Thyroid gland (tissue), 4 donors: ENCODE measurements at regions of chr1 and their contacts with region 1.

Region 1: GRCh38 chr1:163174524-163175437 is 27.9 kb downstream of the RGS5 start:
- DNase-seq: peak; percentile 50 to 63
- H3K4me3 ChIP-seq: no peak overlapping the region
- H3K27ac ChIP-seq: no peak overlapping the region
- H3K4me1 ChIP-seq: peaks cover 0 to 3% of the 10 kb centered on the region in 2 donors
- H3K27me3 ChIP-seq: no peaks in the 10 kb centered on the region
- CTCF ChIP-seq: peak; percentile 32 to 85 (median 72)
- POLR2A ChIP-seq: no peak

Region 2: DNA sequence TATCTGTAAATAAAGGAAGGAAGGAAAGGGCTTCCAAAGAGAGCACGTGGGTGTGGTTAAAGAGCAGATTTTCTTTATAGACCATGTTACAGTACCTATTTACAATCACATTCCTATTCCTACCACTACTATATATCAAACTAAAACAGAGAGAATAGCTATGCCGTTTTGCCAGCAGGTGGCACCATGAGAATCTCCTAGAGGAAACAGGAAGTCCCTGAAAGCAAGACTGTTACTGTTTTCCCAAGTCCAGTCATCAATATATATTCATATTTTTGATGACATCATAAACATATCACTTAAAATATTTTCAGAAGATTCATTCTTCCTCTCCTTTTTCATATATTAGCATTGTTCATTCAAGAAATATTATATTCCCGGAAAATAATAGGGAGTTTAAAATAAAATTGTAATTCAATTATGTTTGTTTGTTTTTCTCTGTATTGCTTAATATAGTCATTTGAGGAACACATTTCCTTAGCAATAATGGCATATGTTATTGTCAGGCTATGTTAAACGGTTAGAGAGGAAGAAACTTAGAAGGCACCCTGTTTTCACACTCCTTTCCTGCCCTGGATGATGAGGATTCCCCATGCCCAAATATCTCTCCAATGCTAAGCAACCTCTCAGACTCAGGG is 320.4 kb before region 1 on chr1:
- intact Hi-C with region 1: loop called (anchors 10 kb)
- DNase-seq: peak; percentile 54 to 66
- H3K4me3 ChIP-seq: no peak overlapping the region
- H3K27ac ChIP-seq: no peak overlapping the region
- H3K4me1 ChIP-seq: peaks cover 0 to 7% of the 10 kb centered on the region in 2 donors
- H3K27me3 ChIP-seq: no peaks in the 10 kb centered on the region
- CTCF ChIP-seq: peak; percentile 28 to 76 (median 56)
- POLR2A ChIP-seq: no peak

Region 3: DNA sequence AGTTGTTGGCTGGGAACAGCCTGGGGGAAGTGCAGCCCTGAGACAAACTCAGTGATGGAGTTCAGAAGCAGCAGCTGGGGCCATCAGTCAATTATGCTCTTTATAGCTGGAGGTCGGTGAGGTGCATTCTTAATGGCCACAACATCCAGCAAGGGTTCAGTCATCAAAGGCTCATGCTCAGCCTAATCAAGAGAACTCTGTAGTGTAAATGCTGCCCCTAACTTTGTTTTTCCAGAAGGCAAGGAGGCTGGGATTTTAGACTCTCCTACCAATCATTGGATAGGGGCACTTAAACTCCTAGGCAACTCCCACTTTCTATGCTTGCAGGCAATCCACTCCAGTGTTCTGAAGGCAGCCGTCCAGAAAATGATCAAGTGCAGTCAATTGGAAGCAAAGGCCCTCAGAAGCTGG is 120.6 kb before region 1 on chr1:
- intact Hi-C with region 1: no loop called
- DNase-seq: peak; percentile 67 to 79
- H3K4me3 ChIP-seq: no peak overlapping the region
- H3K27ac ChIP-seq: no peak overlapping the region
- H3K4me1 ChIP-seq: peaks cover 6 to 7% of the 10 kb centered on the region in 2 donors
- H3K27me3 ChIP-seq: no peaks in the 10 kb centered on the region
- CTCF ChIP-seq: no peak
- POLR2A ChIP-seq: no peak

Region 4: GRCh38 chr1:163106364-163106987 is 68.3 kb before region 1 on chr1:
- intact Hi-C with region 1: no loop called
- DNase-seq: no peak
- H3K4me3 ChIP-seq: no peak overlapping the region
- H3K27ac ChIP-seq: no peak overlapping the region
- H3K4me1 ChIP-seq: no peaks in the 10 kb centered on the region
- H3K27me3 ChIP-seq: no peaks in the 10 kb centered on the region
- CTCF ChIP-seq: no peak
- POLR2A ChIP-seq: no peak